A549 (cell line): ENCODE measurements at regions of chr19 and their contacts with region 1.

Region 1: DNA sequence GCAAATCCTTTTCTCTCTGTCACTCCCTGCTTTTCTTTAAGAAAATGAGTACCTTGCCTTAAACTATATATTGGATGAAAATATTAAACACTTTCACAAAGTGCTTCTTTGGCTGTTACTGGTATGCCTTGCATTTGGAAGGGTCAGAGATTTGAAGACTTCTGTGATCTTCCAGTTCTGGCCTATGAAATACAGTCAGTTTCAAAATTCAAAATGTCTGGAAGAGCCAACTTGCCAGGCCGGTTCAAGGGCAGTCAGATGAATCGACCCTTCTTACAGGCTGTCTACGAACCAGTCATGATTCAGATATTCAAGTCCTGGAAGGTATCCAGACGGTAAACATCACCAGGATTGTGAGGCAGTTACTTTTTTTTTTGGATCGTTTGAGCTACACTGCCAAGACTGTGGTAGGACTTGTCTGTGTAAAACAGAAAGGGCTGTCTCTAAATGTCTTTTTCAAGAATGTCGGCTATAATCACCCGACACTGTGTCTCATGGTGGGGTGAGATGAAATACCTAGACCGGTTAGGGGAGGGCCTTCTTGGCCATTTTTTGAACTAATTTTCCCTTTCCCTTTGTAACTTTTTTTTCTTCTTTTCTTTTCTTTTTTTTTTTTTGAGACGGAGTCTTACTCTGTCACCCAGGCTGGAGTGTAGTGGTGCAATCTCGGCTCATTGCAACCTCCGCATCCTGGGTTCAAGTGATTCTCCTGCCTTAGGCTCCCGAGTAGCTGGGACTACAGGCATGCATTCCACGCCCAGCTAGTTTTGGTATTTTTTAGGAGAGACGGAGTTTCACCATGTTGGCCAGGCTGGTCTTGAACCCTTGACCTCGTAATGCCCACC is 11.2 kb downstream of the ACTN4 start:
- DNase-seq: peak; percentile 99
- ATAC-seq: peak; percentile 82 to 88
- H3K4me3 ChIP-seq: peak overlapping the region; percentile 25
- H3K27ac ChIP-seq: peak overlapping the region; percentile 87 to 91
- H3K4me1 ChIP-seq: peaks cover 98% of the 10 kb centered on the region
- CTCF ChIP-seq: no peak
- EP300 ChIP-seq: peak; percentile 65 to 73; a peak in 2 of 5 replicates
- POLR2A ChIP-seq: no peak
- RAD21 ChIP-seq: peak; percentile 30 to 38; a peak in 2 of 5 replicates

Region 2: DNA sequence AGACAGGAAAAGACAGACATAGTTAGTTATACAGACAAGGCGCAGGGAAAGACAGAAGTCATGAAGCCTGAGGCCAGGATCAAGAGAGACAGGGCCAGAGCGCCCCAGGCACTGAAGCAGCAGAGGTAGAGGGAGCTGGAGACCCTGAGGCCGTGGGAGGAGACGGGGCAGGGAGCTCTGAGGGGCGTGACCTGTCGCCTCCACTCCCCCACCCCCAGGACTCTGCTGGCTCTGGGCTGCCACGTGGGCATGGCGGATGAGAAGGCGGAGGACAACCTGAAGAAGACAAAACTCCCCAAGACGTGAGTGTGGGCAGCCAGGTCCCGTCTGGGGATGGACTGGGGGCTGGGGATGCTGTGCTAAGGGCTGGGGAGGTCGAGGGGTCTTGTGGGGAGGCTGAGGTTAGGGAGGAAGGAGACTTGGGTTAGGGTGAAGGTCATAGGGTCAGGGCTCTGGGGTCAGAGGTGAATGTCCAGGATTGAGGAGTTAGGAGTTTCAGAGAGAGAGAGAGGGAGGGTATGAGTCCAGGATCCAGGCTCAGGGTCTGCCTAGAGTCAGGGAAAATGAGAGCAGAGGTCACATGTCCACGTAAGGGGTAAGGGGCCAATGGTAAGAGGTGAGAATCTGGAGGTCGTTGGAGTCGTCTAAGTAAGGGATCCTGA is 194.1 kb before region 1 on chr19:
- CTCF ChIA-PET with region 1: no interaction called
- POLR2A ChIA-PET with region 1: no interaction called
- DNase-seq: no peak
- ATAC-seq: peak; percentile 9 to 12; a peak in 2 of 6 replicates
- H3K4me3 ChIP-seq: no peak overlapping the region
- H3K27ac ChIP-seq: no peak overlapping the region
- H3K4me1 ChIP-seq: no peaks in the 10 kb centered on the region
- CTCF ChIP-seq: no peak
- EP300 ChIP-seq: no peak
- POLR2A ChIP-seq: no peak
- RAD21 ChIP-seq: no peak

Region 3: GRCh38 chr19:38564981-38565690 is 93.5 kb before region 1 on chr19:
- CTCF ChIA-PET with region 1: no interaction called
- POLR2A ChIA-PET with region 1: no interaction called
- DNase-seq: peak in 1 of 2 experiments; percentile 55
- ATAC-seq: peak; percentile 59 to 64
- H3K4me3 ChIP-seq: peak overlapping the region; percentile 39
- H3K27ac ChIP-seq: peak overlapping the region; percentile 64 to 86
- H3K4me1 ChIP-seq: 0 out of 3 replicates have a peak, but pooled peaks cover 3% of the 10 kb centered on the region
- CTCF ChIP-seq: peak; percentile 22; the same call in 2 of the 3 replicates
- EP300 ChIP-seq: no peak
- POLR2A ChIP-seq: peak; percentile 37; the same call in 1 of the 2 replicates
- RAD21 ChIP-seq: no peak

Region 4: DNA sequence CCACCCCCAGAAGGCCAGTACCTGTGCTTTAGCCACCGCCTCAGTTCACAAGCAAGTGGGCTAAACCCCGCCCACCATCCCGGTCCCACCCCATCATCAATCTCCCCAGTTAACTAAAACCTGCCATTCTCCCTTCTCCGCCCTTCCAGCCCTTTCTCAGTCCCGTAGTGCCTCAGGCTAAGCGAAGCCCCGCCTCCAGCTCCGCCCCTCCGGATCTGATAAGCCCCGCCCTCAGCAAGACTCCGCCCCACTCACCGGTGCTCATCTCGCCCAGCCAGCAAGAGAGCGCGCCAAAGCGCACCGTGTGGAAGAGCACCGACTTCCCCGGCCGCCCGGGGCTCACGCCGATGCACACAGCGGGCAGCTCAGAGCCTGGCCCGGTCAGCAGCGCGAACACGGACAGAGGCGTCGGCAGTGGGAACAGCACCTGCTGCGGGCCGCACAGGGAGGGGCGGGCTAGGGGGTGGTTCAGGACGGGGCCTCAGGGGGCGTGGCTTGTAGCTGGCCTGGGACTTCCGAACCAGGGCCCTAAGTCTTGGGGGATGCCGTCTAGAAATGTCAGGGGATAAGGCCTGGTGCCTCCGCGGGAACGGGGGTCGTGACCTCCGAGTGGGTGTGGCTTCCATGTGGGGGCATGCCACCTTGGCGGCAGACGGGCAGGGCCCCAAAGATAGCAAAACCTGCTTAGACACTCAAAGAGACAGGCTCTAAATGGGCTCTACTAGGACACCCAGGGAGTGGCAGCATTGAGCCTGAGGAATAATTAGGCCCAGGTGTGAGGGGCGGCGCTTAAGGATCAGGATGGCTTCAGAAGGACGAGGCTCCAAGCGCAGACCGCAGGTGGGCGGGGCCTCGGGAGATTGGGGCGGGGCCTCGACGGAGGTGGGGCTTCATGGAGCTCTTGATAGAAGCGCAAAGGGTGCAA is 62.4 kb before region 1 on chr19:
- CTCF ChIA-PET with region 1: no interaction called
- POLR2A ChIA-PET with region 1: no interaction called
- DNase-seq: peak; percentile 84 to 90
- ATAC-seq: peak; percentile 84 to 89
- H3K4me3 ChIP-seq: peak overlapping the region; percentile 42
- H3K27ac ChIP-seq: peak overlapping the region; percentile 19 to 56; a peak in 4 of 6 replicates
- H3K4me1 ChIP-seq: 0 out of 3 replicates have a peak, but pooled peaks cover 5% of the 10 kb centered on the region
- CTCF ChIP-seq: no peak
- EP300 ChIP-seq: 0 out of 5 replicates have a peak, but pooled peaks of 1 of the 2 experiments have one; percentile 12
- POLR2A ChIP-seq: no peak
- RAD21 ChIP-seq: no peak

Region 5: GRCh38 chr19:38618590-38619360 is 39.9 kb before region 1 on chr19 and contains the start of gene EIF3K:
- CTCF ChIA-PET with region 1: no interaction called
- POLR2A ChIA-PET with region 1: interaction called, 10 read pairs
- DNase-seq: peak; percentile 100
- ATAC-seq: peak; percentile 87 to 93
- H3K4me3 ChIP-seq: peak within 1 kb of the TSS; percentile 86
- H3K27ac ChIP-seq: peak within 1 kb of the TSS; percentile 84 to 87
- H3K4me1 ChIP-seq: peaks cover 14% of the 10 kb centered on the region
- CTCF ChIP-seq: no peak
- EP300 ChIP-seq: no peak
- POLR2A ChIP-seq: peak; percentile 85
- RAD21 ChIP-seq: peak in 1 of 2 experiments; percentile 10; a peak in 1 of 5 replicates
- polyA plus RNA-seq, gene EIF3K: 419 and 491 TPM in 2 replicates

Region 6: GRCh38 chr19:38693380-38694223 is 34.9 kb after region 1 on chr19:
- CTCF ChIA-PET with region 1: interaction called, 14 read pairs
- POLR2A ChIA-PET with region 1: interaction called, 7 read pairs
- DNase-seq: peak; percentile 91 to 92
- ATAC-seq: peak; percentile 10 to 54
- H3K4me3 ChIP-seq: 0 out of 3 replicates have a peak overlapping the region, but pooled peaks have one; percentile 1
- H3K27ac ChIP-seq: peak overlapping the region; percentile 93 to 94
- H3K4me1 ChIP-seq: peaks cover 100% of the 10 kb centered on the region
- CTCF ChIP-seq: no peak
- EP300 ChIP-seq: peak; percentile 55 to 84; a peak in 3 of 5 replicates
- POLR2A ChIP-seq: no peak
- RAD21 ChIP-seq: 0 out of 5 replicates have a peak, but pooled peaks of 1 of the 2 experiments have one; percentile 8

Region 7: DNA sequence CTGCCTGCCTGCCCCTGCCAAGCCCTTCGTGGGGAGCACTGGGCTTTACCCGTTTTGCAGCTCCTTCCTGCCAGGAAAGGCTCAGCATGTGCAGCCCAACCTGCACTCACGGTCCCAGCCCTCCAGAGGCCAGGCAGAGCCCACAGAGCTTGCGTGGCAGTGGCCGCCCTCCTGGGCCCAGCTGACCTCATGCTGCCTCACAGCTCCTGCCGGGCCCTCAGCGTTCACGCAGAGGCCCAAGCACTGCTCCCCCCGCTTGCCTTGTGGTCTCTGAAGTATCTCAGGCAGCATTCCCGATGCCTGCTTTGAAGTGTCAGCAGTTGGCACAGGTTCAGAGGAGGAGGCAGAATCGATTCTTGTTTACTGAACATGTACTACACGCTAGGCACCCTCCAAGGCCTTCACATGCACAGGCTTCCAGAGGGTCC is 53.1 kb after region 1 on chr19:
- CTCF ChIA-PET with region 1: interaction called, 10 read pairs
- POLR2A ChIA-PET with region 1: no interaction called
- DNase-seq: no peak
- ATAC-seq: peak; percentile 3 to 10; a peak in 3 of 6 replicates
- H3K4me3 ChIP-seq: no peak overlapping the region
- H3K27ac ChIP-seq: peak overlapping the region; percentile 1 to 50; a peak in 3 of 6 replicates
- H3K4me1 ChIP-seq: peaks cover 46% of the 10 kb centered on the region
- CTCF ChIP-seq: no peak
- EP300 ChIP-seq: no peak
- POLR2A ChIP-seq: no peak
- RAD21 ChIP-seq: no peak